GM10248 (cell line): ENCODE measurements at regions of chr13 and their contacts with region 1.

Region 1: DNA sequence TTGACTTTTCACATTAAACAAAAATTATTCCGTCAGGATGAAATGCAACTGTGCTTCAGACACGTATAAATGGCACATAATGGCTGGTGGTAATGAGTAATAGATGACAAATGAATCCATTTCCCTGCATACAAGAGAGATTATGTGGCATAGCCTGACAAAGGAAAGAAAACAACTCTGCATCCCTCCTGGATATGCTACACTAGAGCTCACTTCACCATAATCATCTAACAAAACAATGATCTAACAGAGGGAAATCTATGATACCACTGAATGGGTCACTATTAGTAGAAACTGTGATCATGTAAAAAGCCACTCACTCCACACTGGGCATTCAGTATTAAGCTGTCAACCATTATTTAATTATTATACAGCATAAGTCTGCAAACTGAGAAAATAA is 1498.4 kb downstream of the EFNB2 start:
- DNase-seq: no peak
- CTCF ChIP-seq: no peak

Region 2: DNA sequence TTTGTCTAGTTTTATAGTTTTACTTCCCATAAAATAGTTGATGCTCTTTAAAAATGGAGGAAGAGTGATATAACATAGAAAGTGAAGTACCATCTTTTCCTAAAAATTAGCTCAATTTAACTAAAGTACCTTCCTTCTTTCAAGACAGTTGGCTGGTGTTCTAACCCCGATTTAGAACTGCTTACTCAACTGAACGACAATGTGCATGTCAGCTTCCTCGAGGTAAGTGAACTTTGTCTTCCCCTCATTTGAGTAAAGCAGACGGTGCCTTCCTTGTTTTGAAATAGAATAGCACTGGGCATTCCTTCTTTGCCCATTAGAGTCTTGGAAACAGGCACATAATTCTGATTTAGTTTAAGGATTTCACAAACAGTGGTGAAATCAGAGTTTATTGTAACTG is 20.8 kb before region 1 on chr13:
- CTCF ChIA-PET with region 1: no interaction called
- POLR2A ChIA-PET with region 1: no interaction called
- DNase-seq: no peak
- CTCF ChIP-seq: no peak

Region 3: GRCh38 chr13:105048677-105049076 is 11.6 kb after region 1 on chr13:
- CTCF ChIA-PET with region 1: interaction called, 11 read pairs
- POLR2A ChIA-PET with region 1: no interaction called
- DNase-seq: peak; percentile 14
- CTCF ChIP-seq: no peak